Panc1 (cell line): ENCODE measurements at regions of chr6 and their contacts with region 1.

Region 1: GRCh38 chr6:1624851-1625781 is 15.4 kb downstream of the FOXC1 start:
- DNase-seq: no peak
- ATAC-seq: no peak
- H3K4me3 ChIP-seq: no peak overlapping the region
- H3K27ac ChIP-seq: no peak overlapping the region
- H3K4me1 ChIP-seq: no peaks in the 10 kb centered on the region
- H3K27me3 ChIP-seq: no peaks in the 10 kb centered on the region
- CTCF ChIP-seq: no peak

Region 2: DNA sequence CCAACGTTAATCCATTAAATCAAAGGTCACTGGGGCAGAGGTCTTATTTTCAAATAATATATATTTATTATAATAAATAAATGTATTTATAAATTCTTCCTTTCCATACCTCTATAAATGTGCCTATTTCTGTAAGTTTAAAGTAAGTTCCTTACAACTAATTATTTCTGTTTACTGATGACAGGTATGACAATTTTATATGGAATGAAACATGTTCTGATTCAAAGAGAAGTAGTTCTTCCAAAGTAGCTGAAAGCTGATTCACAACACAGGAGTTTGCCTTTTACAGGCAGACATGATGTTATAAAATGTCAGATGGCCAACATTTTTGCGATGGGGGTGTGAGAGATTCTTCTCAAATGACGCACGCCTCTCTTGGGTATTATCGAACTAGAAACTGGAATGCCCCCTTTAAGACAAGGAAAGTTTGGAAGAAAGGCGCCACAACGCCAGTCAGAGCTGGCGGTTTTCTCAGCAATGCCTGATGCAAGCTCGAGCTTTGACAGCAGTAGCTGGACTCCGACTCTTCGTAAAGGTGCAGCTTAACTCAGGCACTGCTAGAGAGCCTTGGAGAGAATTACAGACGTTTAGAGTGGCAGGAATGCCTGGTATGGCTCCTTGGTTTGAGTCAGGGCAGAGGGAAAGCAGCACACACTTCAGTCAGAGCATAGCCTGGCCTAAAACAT is 76.7 kb after region 1 on chr6:
- CTCF ChIA-PET with region 1: no interaction called
- POLR2A ChIA-PET with region 1: no interaction called
- in situ Hi-C with region 1: no loop called
- intact Hi-C with region 1: no loop called
- DNase-seq: no peak
- ATAC-seq: no peak
- H3K4me3 ChIP-seq: no peak overlapping the region
- H3K27ac ChIP-seq: no peak overlapping the region
- H3K4me1 ChIP-seq: no peaks in the 10 kb centered on the region
- H3K27me3 ChIP-seq: no peaks in the 10 kb centered on the region
- CTCF ChIP-seq: no peak

Region 3: GRCh38 chr6:2086326-2086965 is 461.3 kb after region 1 on chr6:
- CTCF ChIA-PET with region 1: interaction called, 10 read pairs
- POLR2A ChIA-PET with region 1: interaction called, 4 read pairs
- in situ Hi-C with region 1: no loop called
- intact Hi-C with region 1: no loop called
- DNase-seq: no peak
- ATAC-seq: no peak
- H3K4me3 ChIP-seq: no peak overlapping the region
- H3K27ac ChIP-seq: no peak overlapping the region
- H3K4me1 ChIP-seq: no peaks in the 10 kb centered on the region
- H3K27me3 ChIP-seq: no peaks in the 10 kb centered on the region
- CTCF ChIP-seq: no peak